GM23248 (cell line): ENCODE measurements at regions of chr1 and their contacts with region 1.

Region 1: DNA sequence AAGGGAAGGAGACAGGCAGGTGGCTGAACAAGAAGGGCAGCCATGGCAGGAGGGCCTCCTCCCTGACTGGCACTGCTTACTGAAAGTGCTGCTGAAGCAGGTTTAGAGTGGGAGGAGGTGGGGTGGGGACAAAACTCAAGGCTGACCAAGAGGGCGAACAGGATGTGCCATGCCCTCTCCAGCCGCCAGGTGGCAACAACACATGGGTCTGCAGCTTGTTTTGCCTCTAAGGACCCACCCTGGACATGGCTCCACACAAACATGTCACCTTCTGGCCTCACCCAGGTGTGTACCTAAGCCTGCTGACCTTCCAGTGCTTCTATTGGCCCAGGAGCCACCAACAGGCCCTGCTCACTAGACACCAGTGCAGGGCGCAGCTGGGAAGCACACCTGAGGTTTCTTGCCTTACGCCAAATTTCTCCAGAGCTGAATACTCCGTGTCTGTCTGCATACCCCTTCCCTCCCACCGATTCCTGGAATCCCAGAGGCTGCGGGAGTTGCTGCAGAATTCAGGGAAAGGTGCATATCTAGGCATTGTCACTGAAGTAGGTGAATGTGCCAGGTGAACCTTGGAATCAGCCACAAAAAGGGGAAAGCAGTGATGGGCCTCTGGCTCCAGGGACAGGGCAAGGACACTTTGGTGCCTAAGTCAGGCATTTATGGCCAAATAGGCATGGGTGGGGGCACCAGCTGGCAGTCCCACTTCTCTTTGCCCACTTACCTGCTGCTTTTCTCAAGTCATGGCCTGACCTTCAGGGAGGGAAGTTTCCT is 5.3 kb downstream of the PSRC1 start:
- DNase-seq: peak; percentile 72
- H3K4me3 ChIP-seq: no peak overlapping the region
- H3K27ac ChIP-seq: no peak overlapping the region
- H3K4me1 ChIP-seq: peaks cover 6% of the 10 kb centered on the region; the same call in 1 of the 2 replicates
- H3K27me3 ChIP-seq: no peaks in the 10 kb centered on the region

Region 2: GRCh38 chr1:109341944-109342930 is 64.6 kb after region 1 on chr1:
- in situ Hi-C with region 1: no loop called
- DNase-seq: no peak
- H3K4me3 ChIP-seq: no peak overlapping the region
- H3K27ac ChIP-seq: no peak overlapping the region
- H3K4me1 ChIP-seq: no peaks in the 10 kb centered on the region
- H3K27me3 ChIP-seq: no peaks in the 10 kb centered on the region

Region 3: DNA sequence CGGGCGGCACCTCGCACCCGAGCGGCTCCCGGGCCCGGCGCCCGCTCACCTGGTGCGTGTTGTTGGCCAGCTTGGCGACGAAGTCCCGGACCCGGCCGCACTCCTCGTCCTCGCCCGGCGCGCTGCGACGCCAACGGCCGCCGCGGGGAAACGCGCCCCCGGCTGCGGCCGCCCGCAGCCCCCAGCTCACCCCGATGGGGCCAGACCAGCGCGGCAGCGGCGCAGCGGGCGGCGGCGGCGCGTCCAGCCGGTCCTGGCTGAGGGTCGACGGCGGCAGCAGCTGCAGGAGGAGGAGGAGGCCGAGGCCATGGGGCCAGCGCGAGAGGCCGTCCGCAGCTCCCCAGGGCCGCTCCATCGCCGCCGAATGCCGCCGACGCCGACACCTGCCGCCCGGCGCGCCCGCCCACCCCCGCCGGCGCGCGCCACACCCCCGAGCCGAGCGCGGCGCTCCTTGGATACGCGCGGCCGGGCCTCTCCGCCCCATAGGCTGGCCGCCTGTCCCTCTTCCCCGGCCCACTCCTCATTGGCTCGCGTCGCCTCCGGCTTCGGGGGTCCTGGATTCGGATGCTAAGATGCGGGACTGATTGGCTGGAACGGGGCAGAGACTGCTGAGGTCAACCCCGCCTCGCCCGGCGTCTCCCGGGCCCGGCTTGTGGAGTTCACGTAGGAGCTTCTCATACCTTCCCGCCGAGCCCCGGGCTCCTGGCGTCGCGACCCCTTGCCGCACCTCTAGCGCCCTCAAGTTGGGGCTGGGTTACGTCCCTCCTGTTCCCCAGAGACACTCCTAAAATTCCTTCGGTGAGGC is 120.1 kb after region 1 on chr1 and contains the start of gene SORT1:
- in situ Hi-C with region 1: loop called (anchors 5 kb)
- DNase-seq: peak; percentile 80
- H3K4me3 ChIP-seq: peak within 1 kb of the TSS; percentile 71
- H3K27ac ChIP-seq: no peak within 1 kb of the TSS
- H3K4me1 ChIP-seq: peaks cover 9% of the 10 kb centered on the region
- H3K27me3 ChIP-seq: no peaks in the 10 kb centered on the region
- total RNA-seq, gene SORT1: 8.4 and 11.8 TPM in 2 replicates

Region 4: DNA sequence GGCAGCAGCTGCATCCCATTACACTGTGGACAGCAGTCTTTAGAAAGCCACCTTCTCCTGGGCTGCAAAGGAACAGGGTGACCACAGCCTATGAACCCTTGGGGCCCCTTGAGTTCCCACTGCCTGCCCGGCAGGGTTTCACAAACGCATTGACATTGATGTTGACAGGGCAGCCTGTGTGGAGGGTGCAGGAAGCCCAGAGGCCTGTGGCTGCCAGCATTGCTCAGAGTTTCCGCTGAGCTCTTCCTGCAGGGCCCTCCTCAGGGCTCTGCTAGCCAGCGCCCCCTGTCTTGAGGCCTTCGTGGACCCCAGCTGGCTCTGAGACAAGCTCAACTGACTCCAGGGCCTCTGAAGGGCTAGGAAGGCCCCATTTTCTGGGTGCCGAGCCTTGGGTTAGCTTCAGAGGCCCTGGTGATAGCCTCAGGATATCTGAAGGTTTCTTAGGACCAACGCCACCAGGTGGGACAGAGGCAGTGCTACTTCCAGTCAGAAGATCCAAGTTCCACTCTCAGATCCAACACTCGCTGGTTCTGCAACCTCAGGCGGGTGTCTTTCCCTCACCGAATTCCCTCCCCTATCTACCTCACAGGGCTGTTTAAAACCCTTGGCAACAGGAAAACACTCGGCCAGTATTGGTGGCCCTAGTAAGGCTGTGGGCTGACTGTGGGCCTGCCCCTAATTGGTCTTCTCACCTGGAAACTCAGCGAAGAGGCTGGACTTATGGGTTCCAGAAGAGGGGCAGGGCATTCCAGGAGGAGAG is 513.3 kb after region 1 on chr1:
- in situ Hi-C with region 1: no loop called
- DNase-seq: peak; percentile 72
- H3K4me3 ChIP-seq: no peak overlapping the region
- H3K27ac ChIP-seq: no peak overlapping the region
- H3K4me1 ChIP-seq: peaks cover 31% of the 10 kb centered on the region
- H3K27me3 ChIP-seq: no peaks in the 10 kb centered on the region